KBM-7 (cell line): ENCODE measurements at regions of chr3 and their contacts with region 1.

Region 1: GRCh38 chr3:128438488-128439072 is 28.1 kb downstream of the DNAJB8 start:
- DNase-seq: peak; percentile 43

Region 2: DNA sequence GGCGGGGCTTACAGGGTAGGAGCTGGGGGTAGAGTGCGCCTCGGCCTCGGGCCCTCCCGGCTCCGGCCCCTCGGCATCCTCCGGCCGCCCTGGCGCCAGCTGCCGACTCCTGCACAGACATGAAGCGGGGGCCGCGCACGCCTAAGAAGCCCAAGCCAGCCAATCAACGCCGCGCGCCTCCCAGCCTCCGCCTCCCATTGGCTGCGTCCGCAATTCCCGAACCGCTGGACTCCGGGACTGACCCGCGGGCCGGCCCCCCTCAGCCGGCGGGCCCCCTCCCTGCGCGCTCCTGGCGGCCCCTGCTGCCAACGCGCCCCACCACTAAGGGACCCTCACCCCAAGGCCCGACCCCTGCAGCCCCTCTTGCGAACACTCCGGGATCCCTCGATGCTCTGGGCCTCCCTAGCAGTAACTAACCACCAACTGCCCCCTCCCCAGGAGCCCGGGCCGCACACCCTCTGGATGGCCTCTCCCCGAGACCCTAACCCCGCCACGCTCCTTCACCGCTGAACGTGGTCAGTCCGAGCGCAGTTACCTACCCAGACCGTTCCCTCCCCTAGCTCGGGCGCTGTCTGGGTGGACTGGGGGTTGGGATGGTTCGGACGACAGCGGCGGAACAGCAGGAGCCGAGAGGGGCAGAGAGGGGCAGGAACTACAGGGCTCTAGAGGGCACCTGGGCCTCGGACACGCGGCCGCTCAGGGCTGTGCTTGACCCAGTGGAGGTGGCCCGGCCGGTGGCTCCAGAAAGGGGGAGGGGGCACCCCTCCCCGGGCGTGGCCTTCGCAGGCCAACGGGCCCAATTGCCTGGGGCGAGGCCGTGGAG is 49.4 kb after region 1 on chr3:
- in situ Hi-C with region 1: loop called (anchors 10 kb)
- DNase-seq: peak; percentile 88

Region 3: GRCh38 chr3:128572644-128573105 is 134.1 kb after region 1 on chr3:
- in situ Hi-C with region 1: loop called (anchors 10 kb)
- DNase-seq: no peak

Region 4: DNA sequence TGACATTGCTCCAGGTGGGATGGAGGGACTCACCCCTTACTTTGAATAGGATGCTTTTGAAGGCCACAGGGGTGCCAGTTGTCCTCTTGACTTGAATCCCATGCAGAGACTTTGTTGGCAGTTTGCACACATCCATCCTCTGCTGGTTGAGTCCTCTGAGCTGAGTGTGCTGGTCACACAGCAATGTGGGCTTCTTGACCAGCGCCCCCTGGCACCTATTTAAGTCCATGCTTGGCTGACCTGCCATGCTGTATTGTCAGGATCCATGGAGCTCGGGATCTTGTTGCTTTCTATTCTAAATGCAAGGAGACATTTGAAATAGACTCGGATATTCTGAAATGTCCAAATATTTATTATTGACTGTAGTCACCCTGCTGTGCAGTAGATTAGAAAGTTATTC is 307.2 kb after region 1 on chr3:
- in situ Hi-C with region 1: no loop called
- DNase-seq: no peak